ENCODE measurements at regions of chr16 and their contacts with region 1.

Region 1: DNA sequence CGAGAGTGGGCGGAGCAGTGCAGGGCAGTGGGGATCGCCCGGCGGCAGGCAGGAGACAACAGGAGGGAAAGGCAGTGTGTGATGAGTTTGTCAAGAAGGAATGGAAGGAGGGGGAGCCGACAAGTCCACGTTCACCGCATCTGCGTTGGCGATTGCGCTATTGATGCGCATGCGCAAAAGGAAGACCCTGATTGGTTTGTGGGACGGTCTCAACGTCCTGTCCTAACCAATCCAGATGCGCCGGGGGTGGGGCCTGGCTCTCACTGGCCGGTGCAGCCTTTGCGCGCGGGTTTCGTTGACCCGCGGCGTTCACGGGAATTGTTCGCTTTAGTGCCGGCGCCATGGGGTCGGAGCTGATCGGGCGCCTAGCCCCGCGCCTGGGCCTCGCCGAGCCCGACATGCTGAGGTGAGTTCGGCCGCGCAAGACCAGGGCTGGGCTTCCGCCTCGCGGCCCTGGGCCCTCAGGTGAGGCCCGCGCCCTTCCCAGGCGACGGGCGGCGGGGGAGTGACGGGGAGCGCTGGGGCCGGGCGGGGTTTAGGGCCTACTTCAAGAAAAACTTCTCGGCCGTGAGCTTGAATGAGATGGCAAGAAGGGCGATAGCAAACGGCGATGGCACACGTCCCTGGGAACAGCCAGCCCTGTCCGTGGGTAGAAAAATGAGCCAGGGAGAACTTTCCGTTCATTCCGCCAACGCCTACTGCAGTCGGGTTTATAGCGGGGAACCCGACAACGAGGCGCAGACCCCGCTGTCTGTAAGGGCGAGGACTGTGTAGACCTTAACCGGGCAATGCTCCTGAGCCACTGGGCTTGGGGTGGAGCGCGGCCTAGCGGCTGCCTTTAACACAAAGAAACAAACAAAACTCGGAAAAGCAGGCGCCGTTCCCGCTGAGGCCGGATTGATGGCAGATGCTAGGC is at the start of gene ORC6:
- DNase-seq: peak; percentile 99
- ATAC-seq: peak; percentile 83
- H3K4me3 Mint-ChIP-seq: no peak within 1 kb of the TSS
- H3K27ac Mint-ChIP-seq: no peak within 1 kb of the TSS
- H3K4me1 Mint-ChIP-seq: peaks cover 43% of the 10 kb centered on the region
- H3K27me3 Mint-ChIP-seq: no peaks in the 10 kb centered on the region
- total RNA-seq, gene ORC6: 30.3 to 43.4 TPM

Region 2: DNA sequence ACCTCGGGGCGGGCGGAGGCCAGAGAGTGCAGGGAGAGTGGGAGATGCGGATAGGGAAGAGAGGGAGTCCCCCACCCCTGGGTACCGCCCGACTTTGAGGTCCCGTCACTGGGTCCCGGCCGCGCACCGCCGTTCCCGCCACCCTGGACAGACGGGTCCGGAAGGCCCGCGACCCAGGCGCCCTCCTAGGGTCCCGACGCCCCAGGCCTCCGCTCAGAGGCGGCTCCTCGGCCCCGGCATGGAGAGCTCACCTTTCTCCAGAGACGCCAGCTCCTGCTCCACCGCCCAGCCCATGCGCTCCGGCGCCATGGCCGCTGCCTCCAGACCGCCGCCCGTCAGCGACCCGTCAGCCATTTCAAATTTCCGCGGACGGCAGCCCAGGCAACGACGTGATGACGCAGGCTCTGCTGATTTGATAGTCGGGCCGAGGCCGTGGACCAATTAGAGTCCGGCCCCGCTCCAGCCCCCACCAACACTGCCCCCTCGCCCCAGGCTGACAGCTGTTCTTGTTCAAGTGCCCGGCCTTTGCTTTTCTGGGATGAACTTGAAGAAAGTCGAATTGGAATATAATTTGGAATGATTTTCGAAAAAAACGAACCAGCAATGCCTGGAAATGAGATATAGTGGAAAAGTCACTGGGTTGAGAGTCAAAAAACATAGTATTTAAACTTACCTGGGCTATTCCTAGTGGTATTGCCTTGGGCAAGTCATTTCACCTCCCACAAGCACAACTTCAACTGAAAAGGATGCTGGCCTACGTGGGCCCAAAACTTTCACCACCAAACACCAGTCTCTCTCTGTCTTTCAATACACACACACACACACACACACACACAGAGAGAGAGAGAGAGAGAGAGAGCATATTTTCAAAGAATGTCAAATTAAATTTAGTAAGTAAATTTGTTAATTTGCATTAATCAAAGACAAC is 68.4 kb before region 1 on chr16 and contains the start of gene SHCBP1:
- CTCF ChIA-PET with region 1: no interaction called
- POLR2A ChIA-PET with region 1: no interaction called
- intact Hi-C with region 1: loop called (anchors 1 to 2 kb)
- DNase-seq: peak; percentile 92
- ATAC-seq: peak; percentile 96
- H3K4me3 Mint-ChIP-seq: peak within 1 kb of the TSS; percentile 96
- H3K27ac Mint-ChIP-seq: peak within 1 kb of the TSS; percentile 86
- H3K4me1 Mint-ChIP-seq: peaks cover 16% of the 10 kb centered on the region
- H3K27me3 Mint-ChIP-seq: peaks cover 2% of the 10 kb centered on the region
- total RNA-seq, gene SHCBP1: 29.1 to 47.4 TPM

Region 3: DNA sequence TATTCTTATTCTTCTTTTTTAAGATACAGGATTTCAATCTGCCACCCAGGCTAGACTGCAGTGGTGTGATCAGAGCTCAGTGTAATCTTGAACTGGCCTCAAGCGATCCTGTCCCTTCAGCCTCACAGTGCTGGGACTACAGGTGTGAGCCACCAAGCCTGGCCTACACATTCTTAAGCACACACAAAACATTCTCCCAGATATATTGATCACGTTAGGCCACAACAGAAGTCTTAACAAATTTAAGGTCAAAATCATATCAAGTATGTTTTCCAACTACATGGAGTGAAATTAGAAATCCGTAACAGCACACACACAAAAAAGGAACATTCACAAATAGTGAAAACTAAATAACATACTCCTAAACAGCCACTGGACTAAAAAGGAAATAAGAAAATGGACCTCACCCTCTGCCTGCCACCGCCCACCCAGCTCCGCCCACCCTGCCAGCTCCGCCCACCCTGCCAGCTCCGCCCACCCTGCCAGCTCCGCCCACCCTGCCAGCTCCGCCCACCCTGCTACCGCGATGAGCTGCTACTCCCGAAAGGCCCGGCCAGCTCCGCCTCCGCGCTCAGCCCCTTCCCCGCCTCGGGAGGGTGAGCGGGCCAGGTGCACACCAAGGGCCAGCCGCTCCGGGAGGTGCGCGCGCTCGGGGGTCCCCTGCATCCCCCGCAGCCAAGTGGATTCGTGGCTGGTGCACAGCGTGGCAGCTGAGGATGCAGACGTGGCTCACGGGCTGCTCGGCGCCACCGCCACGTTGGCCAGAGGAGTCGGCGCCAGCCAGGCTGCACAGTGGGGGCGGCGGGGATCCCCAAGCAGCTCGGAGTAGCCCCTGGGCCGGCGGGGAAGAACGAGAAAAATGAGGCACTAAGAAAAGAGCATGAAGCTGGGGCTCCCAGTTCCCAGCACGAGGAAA is 100.1 kb after region 1 on chr16:
- CTCF ChIA-PET with region 1: interaction called, 4 read pairs
- POLR2A ChIA-PET with region 1: no interaction called
- intact Hi-C with region 1: loop called (anchors 1 to 5 kb)
- DNase-seq: peak; percentile 89
- ATAC-seq: peak; percentile 98
- H3K4me3 Mint-ChIP-seq: peak overlapping the region; percentile 69
- H3K27ac Mint-ChIP-seq: peak overlapping the region; percentile 60
- H3K4me1 Mint-ChIP-seq: peaks cover 26% of the 10 kb centered on the region
- H3K27me3 Mint-ChIP-seq: no peaks in the 10 kb centered on the region

Region 4: GRCh38 chr16:46883690-46884512 is 194.3 kb after region 1 on chr16 and contains the start of gene GPT2:
- CTCF ChIA-PET with region 1: no interaction called
- POLR2A ChIA-PET with region 1: interaction called, 3 read pairs
- intact Hi-C with region 1: loop called in 1 of 2 experiments (anchors 1 kb)
- DNase-seq: peak; percentile 91
- ATAC-seq: peak; percentile 96
- H3K4me3 Mint-ChIP-seq: peak within 1 kb of the TSS; percentile 80
- H3K27ac Mint-ChIP-seq: peak within 1 kb of the TSS; percentile 94
- H3K4me1 Mint-ChIP-seq: peaks cover 10% of the 10 kb centered on the region
- H3K27me3 Mint-ChIP-seq: peaks cover 24% of the 10 kb centered on the region
- total RNA-seq, gene GPT2: 25.6 to 34.9 TPM

Region 5: GRCh38 chr16:48244080-48244862 is 1554.6 kb after region 1 on chr16 and contains the start of gene LONP2:
- CTCF ChIA-PET with region 1: no interaction called
- POLR2A ChIA-PET with region 1: no interaction called
- intact Hi-C with region 1: loop called in 1 of 2 experiments (anchors 10 kb)
- DNase-seq: peak; percentile 95
- ATAC-seq: peak; percentile 94
- H3K4me3 Mint-ChIP-seq: peak within 1 kb of the TSS; percentile 91
- H3K27ac Mint-ChIP-seq: peak within 1 kb of the TSS; percentile 88
- H3K4me1 Mint-ChIP-seq: peaks cover 36% of the 10 kb centered on the region
- H3K27me3 Mint-ChIP-seq: no peaks in the 10 kb centered on the region
- total RNA-seq, gene LONP2: 60.3 to 63.2 TPM